Activated T-helper 2 cell treated with anti-CD3 and anti-CD28 coated beads, Interferon-gamma antibody, Interleukin-2, Interleukin-4, amounts not matched to agents 10 μg/mL and 5 μg/mL and 100 μg/mL, durations not matched to agents 14 hours and 24 hours and 36 hours (primary cell): ENCODE measurements at regions of chr10 and their contacts with region 1.

Region 1: DNA sequence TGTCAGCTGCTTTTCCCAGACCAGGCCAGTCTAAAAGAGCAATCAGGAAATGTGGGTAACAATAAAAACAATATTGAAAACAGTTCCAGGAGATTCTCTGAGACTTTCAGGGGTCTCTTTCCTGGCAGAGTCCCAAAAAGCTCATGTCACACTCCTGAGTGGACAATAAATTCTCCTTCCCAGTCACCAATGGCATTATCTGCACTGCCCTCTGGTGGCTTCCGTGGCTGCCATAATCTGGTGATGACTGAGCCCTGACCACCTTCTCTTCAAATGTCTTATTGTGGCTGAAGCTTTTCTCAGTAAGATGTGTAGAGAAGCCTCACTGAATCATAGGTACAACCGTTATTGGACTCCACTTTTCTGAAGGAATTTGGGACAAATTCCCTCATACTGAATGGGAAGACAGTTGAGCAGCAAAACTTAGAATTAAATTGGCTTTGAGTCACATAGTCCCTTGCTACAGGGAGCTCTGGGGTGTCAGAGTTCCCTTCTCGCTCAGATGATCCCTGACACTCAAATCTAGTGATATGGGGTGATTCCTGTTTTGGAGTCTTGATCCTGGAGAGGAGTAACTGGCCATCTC is 24.4 kb upstream of the ASAH2 start:
- DNase-seq: no peak
- H3K4me3 Mint-ChIP-seq: no peak overlapping the region
- H3K27ac Mint-ChIP-seq: no peak overlapping the region
- H3K4me1 Mint-ChIP-seq: peaks cover 1% of the 10 kb centered on the region
- H3K27me3 Mint-ChIP-seq: peaks cover 53% of the 10 kb centered on the region

Region 2: DNA sequence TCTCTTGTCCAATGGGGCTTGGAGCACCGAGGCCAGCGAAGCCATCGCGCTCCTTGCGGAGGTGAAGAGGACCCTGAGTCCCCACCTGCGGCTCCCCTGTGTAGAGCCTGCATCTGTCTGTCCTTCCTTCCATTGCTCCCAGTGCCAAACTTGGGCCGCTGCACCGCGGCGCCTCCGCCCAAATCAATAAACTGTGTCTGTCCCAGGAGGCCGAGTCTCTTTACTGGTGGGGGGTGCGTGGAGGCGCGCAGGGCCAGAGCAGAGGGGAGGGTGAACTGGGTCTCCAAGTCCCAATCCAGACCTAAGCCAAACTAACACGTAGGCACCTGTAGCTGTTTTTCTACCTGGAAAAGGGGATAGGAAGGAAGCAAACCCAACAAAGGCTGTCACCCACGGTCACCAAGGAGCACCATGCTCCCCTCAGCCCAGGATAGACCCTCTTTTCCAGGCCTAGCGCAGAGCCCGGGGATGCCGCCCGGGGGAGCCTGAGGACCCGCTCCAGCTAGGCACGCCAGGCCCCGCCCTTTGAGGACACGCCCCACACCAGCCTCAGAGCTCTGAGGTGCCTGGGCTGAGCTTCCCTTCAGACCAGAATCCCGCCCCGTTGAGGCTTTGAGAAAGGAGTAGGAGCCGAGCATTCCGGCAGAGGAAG is 663.1 kb before region 1 on chr10:
- intact Hi-C with region 1: no loop called
- DNase-seq: no peak
- H3K4me3 Mint-ChIP-seq: peak overlapping the region; percentile 32
- H3K27ac Mint-ChIP-seq: no peak overlapping the region
- H3K4me1 Mint-ChIP-seq: peaks cover 9% of the 10 kb centered on the region
- H3K27me3 Mint-ChIP-seq: peaks cover 70% of the 10 kb centered on the region

Region 3: GRCh38 chr10:49827297-49827696 is 448.4 kb before region 1 on chr10:
- intact Hi-C with region 1: no loop called
- DNase-seq: no peak
- H3K4me3 Mint-ChIP-seq: no peak overlapping the region
- H3K27ac Mint-ChIP-seq: no peak overlapping the region
- H3K4me1 Mint-ChIP-seq: no peaks in the 10 kb centered on the region
- H3K27me3 Mint-ChIP-seq: no peaks in the 10 kb centered on the region

Region 4: DNA sequence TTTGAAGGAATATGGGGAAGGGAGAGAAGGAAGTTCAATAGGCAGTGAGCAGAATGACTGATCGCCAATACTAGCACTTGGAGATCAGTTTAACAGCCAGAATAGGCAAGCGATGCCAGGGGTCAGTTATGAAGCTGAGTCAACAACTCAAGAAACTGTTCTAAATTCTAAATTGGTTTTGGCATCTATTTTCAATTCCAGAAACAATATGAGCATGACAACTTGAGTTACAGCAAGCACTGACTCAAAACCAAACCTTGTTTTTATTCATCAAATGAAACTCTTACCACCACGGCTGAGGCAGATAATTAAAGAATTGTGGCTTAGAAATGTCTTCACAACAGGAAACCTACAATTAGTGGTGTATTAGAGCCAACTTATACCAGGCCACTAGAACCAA is 156.0 kb after region 1 on chr10:
- intact Hi-C with region 1: loop called (anchors 5 kb)
- DNase-seq: no peak
- H3K4me3 Mint-ChIP-seq: peak overlapping the region; percentile 37
- H3K27ac Mint-ChIP-seq: peak overlapping the region; percentile 76
- H3K4me1 Mint-ChIP-seq: peaks cover 34% of the 10 kb centered on the region
- H3K27me3 Mint-ChIP-seq: peaks cover 8% of the 10 kb centered on the region